ENCODE measurements at regions of chr21 and their contacts with region 1.

Region 1: GRCh38 chr21:32994305-32994704 is 31.4 kb upstream of the OLIG2 start:
- DNase-seq: no peak
- H3K4me3 ChIP-seq: no peak overlapping the region
- CTCF ChIP-seq: peak; percentile 25

Region 2: DNA sequence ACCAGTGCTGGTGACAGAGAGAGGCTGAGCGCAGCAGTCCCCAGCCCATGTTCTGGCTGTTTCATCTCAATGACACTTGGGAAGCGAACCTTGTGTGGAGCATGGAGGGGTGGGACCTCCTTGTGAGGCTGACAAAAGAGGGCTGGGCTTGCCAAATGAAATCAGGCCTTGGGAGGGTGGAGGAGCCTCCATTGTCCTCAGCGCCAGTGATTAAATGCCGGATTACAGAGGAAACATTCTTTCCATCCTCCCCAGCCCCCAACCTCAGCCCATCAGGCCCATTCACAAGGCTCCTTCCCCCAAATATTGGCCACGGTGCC is 159.4 kb before region 1 on chr21:
- CTCF ChIA-PET with region 1: interaction called, 12 read pairs
- POLR2A ChIA-PET with region 1: no interaction called
- DNase-seq: no peak
- H3K4me3 ChIP-seq: no peak overlapping the region
- CTCF ChIP-seq: no peak

Region 3: DNA sequence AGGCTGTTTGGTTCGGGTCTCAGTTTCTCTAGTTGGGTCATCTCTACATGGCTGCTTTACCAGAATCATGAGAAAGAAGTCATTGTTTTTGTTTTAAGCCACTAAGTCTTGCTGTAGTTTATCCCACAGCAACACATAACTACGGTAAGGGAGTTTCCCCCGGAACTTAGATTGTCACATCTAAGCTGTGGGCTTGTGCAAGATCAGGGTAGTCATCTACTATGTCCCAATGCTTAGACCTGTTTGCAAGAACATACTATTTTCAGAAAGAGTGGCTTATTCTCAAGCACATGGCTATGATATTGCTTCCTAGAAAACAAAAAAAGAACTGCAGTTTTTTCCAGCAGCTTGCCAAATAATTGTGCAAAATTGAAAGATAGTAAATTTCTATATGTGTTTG is 13.4 kb after region 1 on chr21:
- CTCF ChIA-PET with region 1: interaction called, 14 read pairs
- POLR2A ChIA-PET with region 1: no interaction called
- DNase-seq: no peak
- H3K4me3 ChIP-seq: no peak overlapping the region
- CTCF ChIP-seq: no peak

Region 4: GRCh38 chr21:33127154-33127893 is 133.0 kb after region 1 on chr21:
- CTCF ChIA-PET with region 1: interaction called, 111 read pairs
- POLR2A ChIA-PET with region 1: no interaction called
- DNase-seq: no peak
- H3K4me3 ChIP-seq: peak overlapping the region; percentile 43
- CTCF ChIP-seq: peak; percentile 81